Endothelial cell of umbilical vein (primary cell): ENCODE measurements at regions of chr15 and their contacts with region 1.

Region 1: GRCh38 chr15:39248204-39248603 is 332.7 kb upstream of the THBS1 start:
- DNase-seq: peak; percentile 99
- H3K4me3 ChIP-seq: peak overlapping the region in 1 of 3 experiments; percentile 0
- H3K27ac ChIP-seq: peak overlapping the region; percentile 98
- H3K4me1 ChIP-seq: peaks cover 72% of the 10 kb centered on the region
- H3K27me3 ChIP-seq: no peaks in the 10 kb centered on the region
- CTCF ChIP-seq: no peak
- POLR2A ChIP-seq: no peak

Region 2: GRCh38 chr15:39230205-39230907 is 17.8 kb before region 1 on chr15:
- CTCF ChIA-PET with region 1: interaction called, 3 read pairs
- POLR2A ChIA-PET with region 1: no interaction called
- dilution Hi-C with region 1: no loop called
- intact Hi-C with region 1: loop called (anchors 1 kb)
- DNase-seq: peak; percentile 100
- H3K4me3 ChIP-seq: no peak overlapping the region
- H3K27ac ChIP-seq: peak overlapping the region; percentile 93
- H3K4me1 ChIP-seq: peaks cover 49% of the 10 kb centered on the region
- H3K27me3 ChIP-seq: no peaks in the 10 kb centered on the region
- CTCF ChIP-seq: no peak
- POLR2A ChIP-seq: no peak

Region 3: GRCh38 chr15:39260391-39260790 is 12.2 kb after region 1 on chr15:
- CTCF ChIA-PET with region 1: interaction called, 12 read pairs
- POLR2A ChIA-PET with region 1: interaction called, 33 read pairs
- dilution Hi-C with region 1: no loop called
- intact Hi-C with region 1: loop called (anchors 1 kb)
- DNase-seq: no peak
- H3K4me3 ChIP-seq: no peak overlapping the region
- H3K27ac ChIP-seq: peak overlapping the region; percentile 95
- H3K4me1 ChIP-seq: peaks cover 32% of the 10 kb centered on the region
- H3K27me3 ChIP-seq: no peaks in the 10 kb centered on the region
- CTCF ChIP-seq: no peak
- POLR2A ChIP-seq: no peak

Region 4: GRCh38 chr15:39301589-39301999 is 53.4 kb after region 1 on chr15:
- CTCF ChIA-PET with region 1: no interaction called
- POLR2A ChIA-PET with region 1: no interaction called
- dilution Hi-C with region 1: no loop called
- intact Hi-C with region 1: loop called (anchors 1 kb)
- DNase-seq: peak; percentile 37
- H3K4me3 ChIP-seq: no peak overlapping the region
- H3K27ac ChIP-seq: peak overlapping the region; percentile 92
- H3K4me1 ChIP-seq: peaks cover 31% of the 10 kb centered on the region
- H3K27me3 ChIP-seq: no peaks in the 10 kb centered on the region
- CTCF ChIP-seq: no peak
- POLR2A ChIP-seq: no peak